ENCODE measurements at regions of chr19 and their contacts with region 1.

Region 1: GRCh38 chr19:4534836-4535658 is at the start of gene PLIN5:
- DNase-seq: peak; percentile 82
- ATAC-seq: peak; percentile 81
- total RNA-seq, gene PLIN5: 17.1 TPM

Region 2: DNA sequence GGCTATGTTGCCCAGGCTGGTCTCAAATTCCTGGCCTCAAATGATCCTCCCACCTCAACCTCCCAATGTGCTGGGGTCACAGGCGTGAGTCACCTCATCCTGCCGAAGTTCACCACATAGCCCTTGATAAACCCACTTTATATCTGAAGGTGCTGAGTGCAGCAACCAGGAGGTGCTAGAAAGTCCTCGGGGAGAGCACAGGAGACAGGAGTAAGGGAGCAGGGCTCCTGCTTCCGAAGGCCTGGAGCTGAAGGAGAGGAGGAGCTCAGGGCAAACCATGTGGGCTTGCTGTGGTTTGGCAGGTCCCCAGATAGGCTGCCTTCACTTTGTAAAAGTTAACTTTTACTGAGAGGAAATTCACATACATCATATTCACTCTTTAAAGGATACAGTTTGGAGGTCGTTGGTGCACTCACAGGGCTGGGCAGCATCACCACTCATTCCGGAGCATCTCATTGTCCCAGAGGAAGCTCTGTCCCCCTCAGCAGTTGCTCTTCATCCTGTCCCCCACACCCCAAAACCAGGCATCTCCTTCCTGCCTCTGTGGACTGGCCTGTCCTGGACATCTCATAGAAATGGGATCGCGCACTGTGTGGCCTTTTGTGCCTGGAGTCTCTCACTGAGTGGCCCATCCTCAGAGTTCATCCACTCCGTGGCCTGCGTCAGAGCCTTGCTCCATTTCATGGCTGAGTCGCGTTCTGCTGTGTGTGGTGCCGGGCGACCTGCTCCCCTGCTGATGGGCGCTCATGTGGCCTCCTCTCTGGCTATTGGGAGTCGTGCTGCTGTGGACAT is 483.4 kb after region 1 on chr19:
- intact Hi-C with region 1: loop called (anchors 10 kb)
- DNase-seq: no peak
- ATAC-seq: peak; percentile 75

Measured in sciatic nerve (tissue), 2 donors.